ENCODE measurements at regions of chrX and their contacts with region 1.

Region 1: GRCh38 chrX:133792198-133792953 is 193.0 kb downstream of the GPC3 start:
- DNase-seq: peak; percentile 52 to 58 (median 56)
- ATAC-seq: peak; percentile 93 to 98 (median 97)
- H3K4me3 ChIP-seq: no peak overlapping the region
- H3K27ac ChIP-seq: no peak overlapping the region
- H3K4me1 ChIP-seq: no peaks in the 10 kb centered on the region
- H3K27me3 ChIP-seq: peaks cover 0 to 9% of the 10 kb centered on the region in 2 donors
- CTCF ChIP-seq: peak; percentile 93 to 97 (median 94)
- POLR2A ChIP-seq: no peak

Region 2: GRCh38 chrX:133689997-133690599 is 102.3 kb before region 1 on chrX:
- intact Hi-C with region 1: no loop called
- DNase-seq: no peak
- ATAC-seq: no peak
- H3K4me3 ChIP-seq: no peak overlapping the region
- H3K27ac ChIP-seq: no peak overlapping the region
- H3K4me1 ChIP-seq: no peaks in the 10 kb centered on the region
- H3K27me3 ChIP-seq: no peaks in the 10 kb centered on the region
- CTCF ChIP-seq: no peak
- POLR2A ChIP-seq: no peak

Region 3: DNA sequence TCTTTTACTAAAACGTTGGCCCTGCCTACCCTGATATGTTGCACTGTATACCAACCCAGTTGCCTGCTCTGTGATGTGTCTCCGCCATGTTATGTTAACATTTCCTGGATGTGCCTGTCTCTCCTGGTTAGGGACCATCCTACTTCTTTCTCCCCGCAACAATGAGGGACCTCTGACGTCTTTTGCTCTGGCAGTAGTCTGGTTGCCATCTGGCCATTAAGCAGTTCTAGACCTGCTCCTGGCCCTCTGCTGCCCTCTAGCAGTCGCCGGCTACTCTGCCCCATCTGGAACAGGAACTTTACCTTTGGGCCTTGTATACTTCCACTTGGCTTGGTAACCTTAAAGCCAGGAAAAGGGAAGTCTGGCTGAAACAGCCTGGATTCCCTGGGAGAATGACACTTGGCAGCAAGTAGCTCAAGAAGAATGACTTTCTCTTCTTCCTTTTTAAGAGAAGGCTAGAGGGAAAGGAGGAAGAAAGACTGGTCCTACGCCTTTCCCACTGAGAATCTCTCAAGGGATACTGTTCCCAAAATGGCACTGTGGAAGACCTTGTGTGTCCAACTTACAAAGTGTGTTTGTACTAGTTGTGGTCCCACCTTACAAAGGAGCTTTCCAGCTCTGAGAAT is 129.5 kb after region 1 on chrX:
- intact Hi-C with region 1: loop called in 1 of 2 experiments (anchors 5 kb)
- DNase-seq: peak; percentile 57 to 68 (median 67)
- ATAC-seq: peak; percentile 89 to 98 (median 96)
- H3K4me3 ChIP-seq: no peak overlapping the region
- H3K27ac ChIP-seq: no peak overlapping the region
- H3K4me1 ChIP-seq: no peaks in the 10 kb centered on the region
- H3K27me3 ChIP-seq: peaks cover 0 to 8% of the 10 kb centered on the region in 2 donors
- CTCF ChIP-seq: peak; percentile 60 to 78 (median 72)
- POLR2A ChIP-seq: no peak

Region 4: GRCh38 chrX:133985164-133985966 is 193.0 kb after region 1 on chrX and contains the start of gene GPC3:
- intact Hi-C with region 1: no loop called
- DNase-seq: peak; percentile 44 to 53 (median 51)
- ATAC-seq: peak; percentile 82 to 88 (median 88)
- H3K4me3 ChIP-seq: peak within 1 kb of the TSS; percentile 6 to 48 (median 38)
- H3K27ac ChIP-seq: no peak within 1 kb of the TSS
- H3K4me1 ChIP-seq: no peaks in the 10 kb centered on the region
- H3K27me3 ChIP-seq: peaks cover 0 to 9% of the 10 kb centered on the region in 2 donors
- CTCF ChIP-seq: no peak
- POLR2A ChIP-seq: no peak
- total RNA-seq, gene GPC3: 0.31 to 6.8 (median 1.8) TPM

Measured in right lobe of liver (tissue), 6 donors.